Naive thymus-derived CD4-positive, alpha-beta T cell (primary cell): ENCODE measurements at regions of chr1 and their contacts with region 1.

Region 1: DNA sequence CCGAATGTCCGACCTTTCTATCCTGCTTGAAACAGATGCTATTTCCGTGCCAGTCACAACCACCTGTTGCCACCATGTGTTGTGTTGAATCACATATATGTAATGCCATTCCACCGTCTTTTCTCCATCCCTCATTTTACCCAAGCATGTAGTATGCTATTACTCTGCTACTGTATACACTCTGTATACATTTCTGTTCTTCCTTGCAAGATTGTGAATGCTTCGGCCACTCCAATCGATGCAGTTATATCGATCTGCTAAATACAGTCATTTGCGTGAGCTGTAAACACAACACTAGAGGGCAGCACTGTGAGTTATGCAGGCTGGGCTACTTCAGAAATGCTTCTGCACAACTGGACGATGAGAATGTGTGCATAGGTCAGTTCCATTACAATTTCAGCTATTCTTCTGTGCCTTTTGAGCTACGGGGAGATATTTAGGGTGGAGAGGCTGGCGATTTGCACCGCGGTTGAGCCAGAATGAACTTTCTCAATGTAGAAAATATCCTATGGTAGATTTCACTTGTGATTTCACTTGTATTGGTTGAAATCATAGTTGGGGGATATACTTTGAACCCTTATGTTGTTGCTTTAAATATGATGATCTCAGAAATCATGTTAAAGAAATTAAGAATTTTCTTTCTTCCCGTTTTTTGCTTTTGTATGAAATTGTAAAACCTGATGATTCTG is 289.8 kb downstream of the NTNG1 start:
- DNase-seq: no peak
- ATAC-seq: peak; percentile 48
- H3K4me3 ChIP-seq: no peak overlapping the region
- H3K4me3 Mint-ChIP-seq: no peak overlapping the region
- H3K27ac ChIP-seq: no peak overlapping the region
- H3K27ac Mint-ChIP-seq: peak overlapping the region in 1 of 9 donors; percentile 59
- H3K4me1 ChIP-seq: no peaks in the 10 kb centered on the region
- H3K4me1 Mint-ChIP-seq: no peaks in the 10 kb centered on the region
- H3K27me3 ChIP-seq: peaks cover 0 to 5% of the 10 kb centered on the region in 2 donors
- H3K27me3 Mint-ChIP-seq: peaks cover 2 to 20% (median 9%) of the 10 kb centered on the region in 5 donors

Region 2: DNA sequence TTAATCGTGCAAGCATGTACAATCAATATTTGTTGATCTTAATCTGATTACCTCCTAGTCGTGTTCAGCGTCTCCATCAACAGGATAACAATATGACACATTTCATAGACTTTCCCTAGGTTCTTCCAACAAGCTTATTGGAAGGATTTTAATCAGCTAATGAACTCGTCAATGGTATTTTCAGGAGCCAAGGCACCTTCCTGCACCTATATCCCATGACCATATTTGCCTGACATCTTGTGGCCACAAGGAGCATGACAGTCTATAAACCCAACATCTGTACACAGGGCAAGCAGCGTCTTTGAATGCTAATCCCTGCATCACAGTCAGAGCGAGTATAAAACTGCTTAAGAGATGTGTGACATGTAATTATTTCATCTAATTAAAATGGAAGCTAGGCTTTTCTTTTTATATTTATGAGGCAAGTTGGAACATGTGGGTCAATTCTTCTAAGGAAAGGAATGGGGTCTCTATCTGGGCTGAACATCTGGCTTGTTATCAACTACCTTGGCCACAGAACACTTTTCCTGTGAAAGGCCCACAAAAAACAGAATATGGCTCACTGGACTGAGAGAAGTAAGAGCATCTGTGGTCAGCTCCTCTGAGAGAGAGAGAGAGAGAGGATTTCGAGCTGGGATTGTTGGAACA is 98.9 kb after region 1 on chr1:
- CTCF ChIA-PET with region 1: no interaction called
- POLR2A ChIA-PET with region 1: no interaction called
- intact Hi-C with region 1: loop called in 1 of 2 experiments (anchors 1 kb)
- DNase-seq: peak in 1 of 9 donors; percentile 3
- ATAC-seq: peak; percentile 62
- H3K4me3 ChIP-seq: no peak overlapping the region
- H3K4me3 Mint-ChIP-seq: no peak overlapping the region
- H3K27ac ChIP-seq: no peak overlapping the region
- H3K27ac Mint-ChIP-seq: no peak overlapping the region
- H3K4me1 ChIP-seq: no peaks in the 10 kb centered on the region
- H3K4me1 Mint-ChIP-seq: peaks cover 0 to 5% (median 0%) of the 10 kb centered on the region in 7 donors
- H3K27me3 ChIP-seq: no peaks in the 10 kb centered on the region
- H3K27me3 Mint-ChIP-seq: peaks cover 14 to 33% (median 21%) of the 10 kb centered on the region in 5 donors

Region 3: DNA sequence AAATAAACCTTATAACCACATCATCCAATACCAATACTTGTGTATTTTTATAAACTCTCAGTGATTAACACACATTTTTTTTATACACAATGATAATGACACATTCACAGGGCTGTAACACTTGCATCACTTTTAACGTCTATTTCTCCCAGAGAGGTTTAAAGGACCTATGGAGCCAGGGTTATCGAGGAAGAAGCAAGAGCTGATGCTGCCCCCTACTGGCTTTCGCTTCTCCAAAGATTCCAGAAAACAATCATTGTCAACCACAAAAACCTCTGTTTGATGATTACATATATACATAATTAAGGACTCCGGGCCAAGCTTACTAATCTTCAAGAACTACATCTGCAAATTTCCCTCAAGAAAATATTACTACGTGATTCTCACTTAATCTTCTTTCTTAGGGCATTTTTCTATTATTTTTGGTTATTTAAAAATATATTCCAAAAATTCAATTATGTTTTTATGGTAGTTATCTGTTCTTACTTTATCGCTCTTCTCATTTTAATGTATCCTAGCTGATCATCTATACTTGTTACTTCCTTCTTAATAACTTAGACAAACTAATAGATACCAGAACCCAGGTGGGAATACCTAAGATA is 319.8 kb after region 1 on chr1:
- CTCF ChIA-PET with region 1: no interaction called
- POLR2A ChIA-PET with region 1: no interaction called
- intact Hi-C with region 1: loop called in 1 of 2 experiments (anchors 1 kb)
- DNase-seq: peak in 1 of 9 donors; percentile 10
- ATAC-seq: no peak
- H3K4me3 ChIP-seq: no peak overlapping the region
- H3K4me3 Mint-ChIP-seq: no peak overlapping the region
- H3K27ac ChIP-seq: no peak overlapping the region
- H3K27ac Mint-ChIP-seq: no peak overlapping the region
- H3K4me1 ChIP-seq: no peaks in the 10 kb centered on the region
- H3K4me1 Mint-ChIP-seq: peaks cover 0 to 2% (median 0%) of the 10 kb centered on the region in 7 donors
- H3K27me3 ChIP-seq: no peaks in the 10 kb centered on the region
- H3K27me3 Mint-ChIP-seq: no peaks in the 10 kb centered on the region